ENCODE measurements at regions of chr6 and their contacts with region 1.

Region 1: DNA sequence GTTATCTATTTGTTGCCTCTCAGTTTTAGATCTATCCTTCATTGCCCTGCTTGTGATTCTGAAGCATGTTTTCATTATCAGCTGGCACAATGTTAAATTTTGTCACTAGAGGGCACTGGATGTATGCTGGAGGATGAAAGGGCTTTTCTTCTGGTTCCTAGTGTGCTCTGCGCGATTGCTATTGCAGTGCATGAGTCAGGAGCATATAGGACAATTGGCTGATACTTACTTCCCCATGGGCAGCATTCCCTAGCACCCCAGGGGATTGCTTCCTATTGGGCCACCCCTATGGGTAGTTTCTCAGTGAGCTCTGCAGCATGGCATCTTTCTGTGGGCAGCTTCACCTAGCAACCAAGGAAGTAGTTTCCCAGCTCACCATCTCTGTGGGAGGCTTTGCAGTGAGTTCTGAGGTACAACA is 280.3 kb upstream of the SYNCRIP start:
- DNase-seq: peak; percentile 71
- H3K4me3 Mint-ChIP-seq: no peak overlapping the region
- H3K27ac Mint-ChIP-seq: no peak overlapping the region
- H3K4me1 Mint-ChIP-seq: no peaks in the 10 kb centered on the region
- H3K27me3 Mint-ChIP-seq: no peaks in the 10 kb centered on the region
- CTCF ChIP-seq: peak; percentile 72

Region 2: DNA sequence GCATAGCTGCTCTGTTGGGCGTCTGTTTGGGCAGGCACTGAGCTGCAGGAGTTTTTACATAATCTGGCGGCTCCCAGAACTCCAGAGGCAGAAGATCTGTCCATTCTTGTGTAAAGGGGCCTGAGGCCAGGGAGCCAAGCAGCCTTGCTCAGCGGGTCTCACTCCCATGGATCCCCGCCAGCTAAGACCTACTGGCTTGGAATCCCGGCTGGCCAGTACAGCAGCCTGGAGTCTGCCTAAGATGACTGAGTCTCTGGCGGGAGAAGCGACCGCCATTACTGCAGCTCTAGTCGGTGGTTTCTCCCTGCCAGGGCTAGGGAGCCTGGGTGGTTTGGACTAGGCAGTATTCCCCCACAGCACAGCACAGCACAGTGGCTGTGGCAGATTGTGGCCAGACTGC is 12.0 kb before region 1 on chr6:
- CTCF ChIA-PET with region 1: interaction called, 16 read pairs
- POLR2A ChIA-PET with region 1: no interaction called
- intact Hi-C with region 1: no loop called
- DNase-seq: no peak
- H3K4me3 Mint-ChIP-seq: no peak overlapping the region
- H3K27ac Mint-ChIP-seq: no peak overlapping the region
- H3K4me1 Mint-ChIP-seq: no peaks in the 10 kb centered on the region
- H3K27me3 Mint-ChIP-seq: peaks cover 21% of the 10 kb centered on the region
- CTCF ChIP-seq: no peak

Region 3: GRCh38 chr6:86192123-86192522 is 269.1 kb after region 1 on chr6:
- CTCF ChIA-PET with region 1: no interaction called
- POLR2A ChIA-PET with region 1: no interaction called
- intact Hi-C with region 1: loop called (anchors 1 kb)
- DNase-seq: peak; percentile 37
- H3K4me3 Mint-ChIP-seq: no peak overlapping the region
- H3K27ac Mint-ChIP-seq: no peak overlapping the region
- H3K4me1 Mint-ChIP-seq: no peaks in the 10 kb centered on the region
- H3K27me3 Mint-ChIP-seq: no peaks in the 10 kb centered on the region
- CTCF ChIP-seq: peak; percentile 17

Region 4: DNA sequence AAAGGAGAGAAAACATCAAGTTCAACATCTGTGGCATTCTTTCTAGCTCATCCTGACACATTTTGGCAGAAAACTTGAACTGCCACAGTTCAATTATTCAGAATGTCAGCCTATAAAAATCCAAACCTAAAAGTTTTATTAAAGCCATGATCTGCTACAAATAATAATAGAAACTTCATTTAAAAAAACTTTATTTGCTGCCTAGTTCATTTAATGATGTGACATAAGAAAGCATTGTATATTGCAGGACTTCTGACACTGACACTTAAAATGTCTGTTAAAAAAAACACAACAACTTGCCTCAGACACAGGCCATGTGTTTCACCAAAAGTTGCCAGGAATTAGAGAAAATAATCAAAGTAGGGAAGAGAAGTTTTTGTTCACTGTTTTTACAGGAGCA is 926.0 kb after region 1 on chr6:
- CTCF ChIA-PET with region 1: interaction called, 13 read pairs
- POLR2A ChIA-PET with region 1: no interaction called
- intact Hi-C with region 1: no loop called
- DNase-seq: no peak
- H3K4me3 Mint-ChIP-seq: no peak overlapping the region
- H3K27ac Mint-ChIP-seq: no peak overlapping the region
- H3K4me1 Mint-ChIP-seq: no peaks in the 10 kb centered on the region
- H3K27me3 Mint-ChIP-seq: no peaks in the 10 kb centered on the region
- CTCF ChIP-seq: no peak

Region 5: DNA sequence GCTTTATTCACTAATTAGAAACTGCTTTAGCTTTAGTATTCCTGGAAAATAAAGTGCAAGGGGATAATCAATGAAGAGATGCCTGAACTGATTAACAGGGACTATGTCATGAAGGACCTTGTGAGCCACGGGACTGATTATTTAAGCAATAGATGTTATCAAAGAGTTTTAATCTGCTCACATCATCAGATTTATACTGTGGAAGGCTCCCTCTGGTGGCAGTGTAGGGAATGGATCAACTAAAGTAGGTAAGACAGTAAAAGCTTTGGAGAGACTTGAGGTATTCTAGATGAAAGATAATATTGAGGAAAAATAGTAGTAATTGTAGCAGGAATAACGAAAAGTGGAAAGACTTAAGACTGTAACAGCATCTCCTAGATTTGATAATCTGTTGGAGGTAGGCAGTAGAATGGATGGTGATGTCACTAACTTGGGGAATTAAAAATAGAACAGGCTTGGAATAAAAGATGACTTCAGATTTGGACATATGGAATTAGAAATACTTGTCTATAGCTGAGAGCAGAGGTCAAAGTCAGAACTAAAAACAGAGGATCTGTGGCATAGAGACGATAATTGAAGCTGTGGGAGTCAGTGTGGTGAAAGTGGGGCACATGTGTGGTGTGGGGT is 934.0 kb after region 1 on chr6:
- CTCF ChIA-PET with region 1: interaction called, 14 read pairs
- POLR2A ChIA-PET with region 1: no interaction called
- intact Hi-C with region 1: loop called (anchors 1 kb)
- DNase-seq: peak; percentile 68
- H3K4me3 Mint-ChIP-seq: no peak overlapping the region
- H3K27ac Mint-ChIP-seq: no peak overlapping the region
- H3K4me1 Mint-ChIP-seq: no peaks in the 10 kb centered on the region
- H3K27me3 Mint-ChIP-seq: no peaks in the 10 kb centered on the region
- CTCF ChIP-seq: peak; percentile 70

Region 6: GRCh38 chr6:86937219-86938079 is 1014.4 kb after region 1 on chr6 and contains the start of gene HTR1E:
- CTCF ChIA-PET with region 1: interaction called, 9 read pairs
- POLR2A ChIA-PET with region 1: no interaction called
- intact Hi-C with region 1: loop called (anchors 1 kb)
- DNase-seq: peak; percentile 48
- H3K4me3 Mint-ChIP-seq: peak within 1 kb of the TSS; percentile 56
- H3K27ac Mint-ChIP-seq: no peak within 1 kb of the TSS
- H3K4me1 Mint-ChIP-seq: peaks cover 7% of the 10 kb centered on the region
- H3K27me3 Mint-ChIP-seq: peaks cover 67% of the 10 kb centered on the region
- CTCF ChIP-seq: peak; percentile 68
- total RNA-seq, gene HTR1E: not detected in 2 replicates

Region 7: DNA sequence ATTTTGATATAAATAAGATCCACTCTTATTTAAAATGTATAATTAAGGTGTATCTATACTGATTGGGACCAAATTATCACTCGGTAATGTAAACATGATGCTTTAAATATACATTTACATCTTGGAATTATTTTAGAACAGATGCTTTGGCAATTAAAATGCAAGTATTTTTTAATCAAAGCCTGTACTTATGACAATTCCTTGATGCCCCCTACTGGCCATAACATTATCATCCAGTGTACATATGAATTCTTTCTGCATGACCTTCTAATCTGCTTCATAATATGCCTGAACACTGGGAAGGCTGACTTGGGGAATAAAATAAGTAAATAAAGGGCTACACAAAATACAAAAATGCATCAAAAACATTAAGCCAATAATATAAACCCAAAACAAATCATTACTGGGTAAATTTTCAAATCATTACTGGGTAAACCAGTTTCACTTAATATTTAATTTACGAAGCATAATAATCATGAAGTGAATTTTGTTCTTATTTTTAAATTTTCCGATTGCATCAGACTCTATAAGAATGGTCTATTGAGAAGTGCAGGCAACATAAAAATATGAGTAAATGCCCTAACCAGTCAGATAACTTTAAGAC is 1106.8 kb after region 1 on chr6:
- CTCF ChIA-PET with region 1: interaction called, 15 read pairs
- POLR2A ChIA-PET with region 1: no interaction called
- intact Hi-C with region 1: loop called (anchors 1 kb)
- DNase-seq: peak; percentile 67
- H3K4me3 Mint-ChIP-seq: no peak overlapping the region
- H3K27ac Mint-ChIP-seq: no peak overlapping the region
- H3K4me1 Mint-ChIP-seq: no peaks in the 10 kb centered on the region
- H3K27me3 Mint-ChIP-seq: peaks cover 34% of the 10 kb centered on the region
- CTCF ChIP-seq: peak; percentile 51

Region 8: GRCh38 chr6:87251225-87251624 is 1328.2 kb after region 1 on chr6:
- CTCF ChIA-PET with region 1: no interaction called
- POLR2A ChIA-PET with region 1: no interaction called
- intact Hi-C with region 1: no loop called
- DNase-seq: no peak
- H3K4me3 Mint-ChIP-seq: no peak overlapping the region
- H3K27ac Mint-ChIP-seq: no peak overlapping the region
- H3K4me1 Mint-ChIP-seq: no peaks in the 10 kb centered on the region
- H3K27me3 Mint-ChIP-seq: no peaks in the 10 kb centered on the region
- CTCF ChIP-seq: no peak

Measured in MCF 10A (cell line).